ENCODE measurements at regions of chr15 and their contacts with region 1.

Region 1: GRCh38 chr15:58070801-58071418 is 5.4 kb upstream of the ALDH1A2 start:
- DNase-seq: peak; percentile 38
- H3K4me3 ChIP-seq: peak overlapping the region in 1 of 2 experiments; percentile 46; a peak in 1 of 4 replicates
- H3K27ac ChIP-seq: no peak overlapping the region
- H3K4me1 ChIP-seq: no peaks in the 10 kb centered on the region; a peak in 1 of 4 replicates
- H3K27me3 ChIP-seq: peaks cover 15% of the 10 kb centered on the region
- CTCF ChIP-seq: peak; percentile 99
- EP300 ChIP-seq: no peak
- RAD21 ChIP-seq: peak; percentile 86

Region 2: DNA sequence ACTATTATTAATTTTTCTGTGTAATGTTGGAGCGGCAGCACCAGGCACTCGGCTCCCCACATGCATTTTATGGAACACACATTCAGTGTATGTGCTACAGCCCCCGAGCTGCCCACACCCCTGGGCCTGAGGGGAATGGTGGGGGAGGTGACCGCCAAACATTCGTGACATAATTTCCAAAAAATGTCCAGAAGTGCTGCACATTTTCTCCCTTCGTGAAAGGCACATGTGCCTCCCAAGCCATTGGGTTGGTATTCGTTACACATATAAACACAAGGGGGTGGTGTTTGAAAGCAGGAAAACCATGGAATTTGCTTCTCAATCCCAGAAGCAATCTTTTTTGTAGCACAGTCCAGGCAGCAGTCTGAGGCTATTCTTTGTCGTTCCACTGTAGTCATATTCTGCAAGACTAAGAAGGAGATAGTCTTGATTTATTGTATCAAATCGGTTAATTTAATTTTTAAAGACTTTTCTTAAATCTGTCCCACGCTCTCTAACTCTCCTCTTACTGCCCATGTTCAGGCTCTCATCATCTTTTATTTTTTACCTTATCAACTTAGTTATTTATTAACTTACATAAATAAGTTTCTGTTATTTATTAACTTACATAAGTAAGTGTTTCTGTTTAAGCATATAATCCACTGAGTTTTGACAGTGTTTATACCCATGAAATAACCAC is 403.6 kb before region 1 on chr15:
- CTCF ChIA-PET with region 1: interaction called, 10 read pairs
- POLR2A ChIA-PET with region 1: no interaction called
- DNase-seq: peak; percentile 42
- H3K4me3 ChIP-seq: no peak overlapping the region
- H3K27ac ChIP-seq: no peak overlapping the region
- H3K4me1 ChIP-seq: peaks cover 0 to 2% of the 10 kb centered on the region in 2 experiments; a peak in 1 of 4 replicates
- H3K27me3 ChIP-seq: no peaks in the 10 kb centered on the region; the same call in 1 of the 2 replicates
- CTCF ChIP-seq: peak; percentile 68
- EP300 ChIP-seq: no peak
- RAD21 ChIP-seq: peak; percentile 78

Region 3: DNA sequence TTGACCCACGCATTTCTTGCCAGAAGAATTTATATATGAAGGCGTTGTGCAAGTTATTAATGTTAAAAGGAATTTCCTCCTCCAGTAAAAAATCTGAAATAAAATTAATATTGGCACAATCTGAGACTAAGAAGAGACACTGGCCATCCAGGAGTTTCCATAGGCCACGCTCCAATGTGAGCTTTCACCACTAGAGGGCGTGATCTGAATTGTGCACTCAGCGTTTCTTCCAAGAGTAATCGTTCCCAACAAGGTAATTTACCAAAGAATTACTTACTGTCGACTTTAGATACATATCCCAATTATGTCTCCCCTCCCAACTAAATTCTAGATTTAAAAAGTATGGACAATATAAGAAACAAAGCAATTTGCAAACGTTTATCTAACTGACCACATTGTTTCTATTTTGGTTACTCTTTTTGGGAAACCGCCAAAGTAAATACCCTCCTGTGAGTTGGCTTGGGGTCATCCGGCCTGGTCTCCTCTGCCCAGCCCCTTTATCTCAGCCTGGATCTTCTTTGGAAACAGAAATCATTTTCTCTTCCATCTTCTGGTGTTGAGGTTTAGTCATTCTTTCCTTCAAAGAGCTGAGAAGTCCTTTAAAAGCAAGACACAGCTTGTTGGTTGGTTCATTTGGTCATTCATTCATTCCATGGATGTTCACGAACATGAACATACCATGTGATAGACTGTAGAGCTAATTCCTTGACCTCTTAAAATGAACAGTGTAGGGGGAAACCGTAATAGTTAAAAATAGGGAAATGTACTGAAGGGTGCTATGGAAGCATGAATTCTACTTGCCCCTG is 338.2 kb before region 1 on chr15:
- CTCF ChIA-PET with region 1: interaction called, 58 read pairs
- POLR2A ChIA-PET with region 1: no interaction called
- DNase-seq: peak; percentile 51
- H3K4me3 ChIP-seq: peak overlapping the region in 1 of 2 experiments; percentile 27; a peak in 1 of 4 replicates
- H3K27ac ChIP-seq: peak overlapping the region in 1 of 2 experiments; percentile 29; a peak in 2 of 4 replicates
- H3K4me1 ChIP-seq: peaks cover 9% of the 10 kb centered on the region in 2 experiments; a peak in 3 of 4 replicates
- H3K27me3 ChIP-seq: no peaks in the 10 kb centered on the region
- CTCF ChIP-seq: peak; percentile 98
- EP300 ChIP-seq: peak in 1 of 2 experiments; percentile 42; a peak in 1 of 4 replicates
- RAD21 ChIP-seq: peak; percentile 56

Region 4: DNA sequence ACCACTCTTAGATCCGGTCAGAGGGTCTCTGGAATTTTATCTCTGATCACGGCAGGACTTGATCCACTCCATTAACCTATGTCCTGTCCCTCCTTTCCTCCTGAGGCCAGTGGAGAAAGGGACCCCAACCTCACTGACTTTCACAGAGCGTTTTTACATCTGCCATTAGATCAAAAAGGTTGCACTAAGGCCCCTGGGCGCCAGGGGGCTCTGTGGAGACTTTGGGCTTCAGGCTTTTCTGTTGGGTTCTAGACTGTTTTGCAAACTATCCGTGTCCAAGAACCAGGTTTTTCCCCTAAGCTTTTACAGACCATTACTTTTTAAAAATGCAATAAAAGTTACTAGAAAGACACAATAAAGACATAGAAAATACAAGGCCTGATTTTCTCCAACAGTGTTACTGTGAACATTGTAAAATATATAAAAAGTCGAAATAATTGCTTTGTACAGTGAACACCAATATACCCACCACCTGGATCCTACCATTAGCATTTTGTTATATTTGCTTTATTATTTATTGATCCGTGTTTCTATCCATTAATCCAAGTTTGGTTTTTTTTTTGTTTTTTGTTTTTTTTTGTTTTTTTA is 204.7 kb before region 1 on chr15:
- CTCF ChIA-PET with region 1: interaction called, 216 read pairs
- POLR2A ChIA-PET with region 1: no interaction called
- DNase-seq: peak; percentile 42
- H3K4me3 ChIP-seq: peak overlapping the region in 1 of 2 experiments; percentile 51; a peak in 1 of 4 replicates
- H3K27ac ChIP-seq: no peak overlapping the region
- H3K4me1 ChIP-seq: no peaks in the 10 kb centered on the region
- H3K27me3 ChIP-seq: no peaks in the 10 kb centered on the region
- CTCF ChIP-seq: peak; percentile 70
- EP300 ChIP-seq: no peak
- RAD21 ChIP-seq: peak; percentile 69

Region 5: DNA sequence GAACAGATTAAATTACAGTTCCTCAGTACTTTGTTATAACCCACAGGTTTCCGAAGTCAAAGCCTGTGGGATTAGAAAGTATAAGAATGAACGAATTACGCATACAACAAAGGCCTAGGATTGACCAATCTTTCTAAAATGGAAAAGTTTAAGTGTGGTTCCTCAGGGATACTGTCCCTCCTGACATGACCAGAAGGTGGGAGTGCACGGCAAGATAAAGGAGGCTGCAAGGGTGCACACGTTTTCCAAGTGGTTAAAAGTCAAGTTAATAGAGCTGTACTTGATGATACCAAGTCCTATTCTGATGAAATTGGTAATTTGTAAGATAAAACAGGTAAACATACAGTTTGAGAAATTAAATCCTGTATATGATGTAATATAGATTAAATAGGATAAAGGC is 101.6 kb before region 1 on chr15:
- CTCF ChIA-PET with region 1: interaction called, 16 read pairs
- POLR2A ChIA-PET with region 1: no interaction called
- DNase-seq: no peak
- H3K4me3 ChIP-seq: no peak overlapping the region
- H3K27ac ChIP-seq: no peak overlapping the region
- H3K4me1 ChIP-seq: peaks cover 0 to 8% of the 10 kb centered on the region in 2 experiments; a peak in 1 of 4 replicates
- H3K27me3 ChIP-seq: no peaks in the 10 kb centered on the region; the same call in 1 of the 2 replicates
- CTCF ChIP-seq: peak; percentile 43
- EP300 ChIP-seq: no peak
- RAD21 ChIP-seq: peak; percentile 49

Region 6: DNA sequence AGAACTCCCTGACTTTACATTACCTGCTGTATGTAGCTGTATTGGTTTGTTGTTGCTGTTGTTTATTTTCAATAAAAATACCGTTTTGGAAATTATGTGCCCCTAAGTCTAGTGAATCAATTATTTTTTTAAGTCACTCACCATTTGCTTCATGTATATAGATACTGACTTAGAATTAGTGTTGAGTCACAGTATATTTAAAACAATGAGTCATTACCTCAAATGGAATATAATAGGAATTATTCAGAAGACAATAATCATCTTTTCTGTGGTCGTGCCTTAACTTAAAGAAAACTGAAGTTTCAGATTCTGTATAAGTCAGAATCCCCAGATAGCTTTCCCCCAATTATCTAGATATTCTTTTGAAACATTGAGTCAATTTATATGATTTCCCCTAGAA is 15.6 kb after region 1 on chr15:
- CTCF ChIA-PET with region 1: interaction called, 16 read pairs
- POLR2A ChIA-PET with region 1: no interaction called
- DNase-seq: no peak
- H3K4me3 ChIP-seq: no peak overlapping the region
- H3K27ac ChIP-seq: no peak overlapping the region
- H3K4me1 ChIP-seq: no peaks in the 10 kb centered on the region
- H3K27me3 ChIP-seq: no peaks in the 10 kb centered on the region
- CTCF ChIP-seq: no peak
- EP300 ChIP-seq: no peak
- RAD21 ChIP-seq: no peak